Panc1 (cell line): ENCODE measurements at regions of chr5 and their contacts with region 1.

Region 1: DNA sequence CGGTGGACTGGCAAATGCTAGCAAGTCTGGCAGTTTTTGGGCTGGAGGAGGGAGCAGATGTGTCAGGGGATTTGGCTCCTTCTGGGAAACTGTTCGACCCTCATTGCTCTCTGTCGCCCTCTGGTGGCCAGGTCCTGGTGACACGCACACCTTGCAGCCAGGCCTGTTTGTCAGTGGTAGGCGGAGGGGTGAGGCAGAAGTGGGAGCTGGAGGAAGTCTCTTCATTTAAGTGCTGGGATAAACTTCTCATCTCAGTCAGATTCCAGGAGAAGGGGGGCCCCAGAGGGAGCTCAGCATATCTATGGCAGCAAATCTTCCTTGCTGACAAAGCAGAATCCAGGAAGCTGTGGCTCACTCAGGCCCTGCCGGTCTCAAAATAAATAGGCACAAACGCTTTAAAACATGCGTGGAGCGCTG is 326.5 kb downstream of the ZSWIM6 start:
- DNase-seq: peak; percentile 64
- ATAC-seq: peak; percentile 95
- H3K4me3 ChIP-seq: no peak overlapping the region
- H3K27ac ChIP-seq: no peak overlapping the region
- H3K4me1 ChIP-seq: no peaks in the 10 kb centered on the region; the same call in 1 of the 2 replicates
- H3K27me3 ChIP-seq: peaks cover 5% of the 10 kb centered on the region; the same call in 1 of the 2 replicates
- CTCF ChIP-seq: peak; percentile 96

Region 2: GRCh38 chr5:60259730-60260129 is 1398.9 kb before region 1 on chr5:
- CTCF ChIA-PET with region 1: no interaction called
- POLR2A ChIA-PET with region 1: no interaction called
- in situ Hi-C with region 1: no loop called
- intact Hi-C with region 1: no loop called
- DNase-seq: no peak
- ATAC-seq: no peak
- H3K4me3 ChIP-seq: no peak overlapping the region
- H3K27ac ChIP-seq: no peak overlapping the region
- H3K4me1 ChIP-seq: no peaks in the 10 kb centered on the region
- H3K27me3 ChIP-seq: no peaks in the 10 kb centered on the region
- CTCF ChIP-seq: no peak

Region 3: DNA sequence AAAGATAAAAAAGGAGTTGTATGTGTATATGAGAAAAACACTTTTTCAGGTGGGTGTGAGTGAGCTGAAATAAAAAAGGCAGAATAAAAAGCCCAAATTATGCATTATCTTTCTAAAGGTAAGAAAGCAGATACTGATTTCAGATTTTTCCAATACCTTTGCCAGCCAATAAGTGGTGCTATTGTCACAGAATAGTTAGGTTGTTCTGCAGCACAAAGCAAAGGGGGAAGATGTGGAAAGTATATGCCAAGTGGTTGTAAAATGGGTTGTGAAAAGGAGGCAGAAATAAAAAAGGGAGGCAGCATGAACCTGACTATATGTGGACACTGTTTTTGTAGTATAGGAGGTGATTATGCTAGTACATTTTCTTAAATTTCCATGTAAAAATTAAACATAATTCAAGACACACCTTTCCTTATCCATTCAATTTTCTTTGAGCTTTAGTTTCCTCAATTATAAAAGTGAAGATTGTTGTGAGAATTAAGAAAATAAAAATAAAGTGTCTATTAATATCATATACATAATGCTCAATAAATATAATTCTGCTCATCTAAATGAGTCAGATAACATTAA is 603.1 kb before region 1 on chr5:
- CTCF ChIA-PET with region 1: interaction called, 3 read pairs
- POLR2A ChIA-PET with region 1: no interaction called
- in situ Hi-C with region 1: no loop called
- intact Hi-C with region 1: loop called (anchors 5 kb)
- DNase-seq: no peak
- ATAC-seq: no peak
- H3K4me3 ChIP-seq: no peak overlapping the region
- H3K27ac ChIP-seq: no peak overlapping the region
- H3K4me1 ChIP-seq: peaks cover 21% of the 10 kb centered on the region; the same call in 1 of the 2 replicates
- H3K27me3 ChIP-seq: no peaks in the 10 kb centered on the region
- CTCF ChIP-seq: peak; percentile 72; the same call in 1 of the 2 replicates

Region 4: DNA sequence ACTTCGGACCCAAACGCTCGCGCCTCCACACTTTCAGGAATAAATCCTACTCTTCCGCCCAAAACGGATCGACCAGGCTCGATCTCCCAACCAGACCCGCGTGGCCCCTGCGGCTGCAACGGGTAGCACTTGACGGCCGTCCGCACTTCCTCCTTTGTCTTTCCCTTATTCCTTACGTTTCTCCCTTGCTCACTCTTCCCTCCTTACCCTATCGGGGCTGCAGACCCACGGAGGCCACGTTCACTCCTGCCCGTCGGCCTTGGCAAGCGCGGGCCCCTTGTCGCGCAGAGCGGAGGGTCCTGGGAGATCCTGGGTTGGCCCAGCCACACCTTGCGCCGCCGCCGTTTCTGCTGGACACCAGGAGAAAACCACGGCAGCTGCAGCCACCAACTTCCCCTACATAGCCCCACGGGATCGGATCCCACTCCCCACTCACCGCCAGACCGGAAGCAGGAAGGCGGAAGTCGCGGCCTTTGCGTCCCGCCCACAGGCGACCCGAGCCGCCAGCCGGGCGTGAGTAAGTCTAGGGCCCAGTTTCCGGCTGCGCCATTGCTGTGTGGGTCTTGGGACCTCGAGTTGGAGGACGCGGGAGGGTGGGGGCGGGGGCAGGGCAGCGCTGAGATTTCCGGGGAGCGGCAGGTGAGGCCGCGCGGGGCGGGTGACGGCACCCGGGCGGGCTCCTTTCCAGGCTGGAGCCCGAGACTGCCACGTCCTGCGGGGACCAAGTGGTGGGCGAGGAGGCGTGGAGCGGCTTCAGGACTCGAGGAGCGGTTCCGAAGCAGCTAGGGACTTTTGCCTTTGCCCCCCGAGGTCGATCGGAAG is 496.4 kb before region 1 on chr5 and contains the start of gene SMIM15:
- CTCF ChIA-PET with region 1: no interaction called
- POLR2A ChIA-PET with region 1: no interaction called
- in situ Hi-C with region 1: no loop called
- intact Hi-C with region 1: loop called (anchors 10 kb)
- DNase-seq: no peak
- ATAC-seq: peak; percentile 99
- H3K4me3 ChIP-seq: peak within 1 kb of the TSS; percentile 96
- H3K27ac ChIP-seq: peak within 1 kb of the TSS; percentile 97
- H3K4me1 ChIP-seq: peaks cover 30% of the 10 kb centered on the region
- H3K27me3 ChIP-seq: no peaks in the 10 kb centered on the region
- CTCF ChIP-seq: no peak
- total RNA-seq, gene SMIM15: 77.5 TPM

Region 5: DNA sequence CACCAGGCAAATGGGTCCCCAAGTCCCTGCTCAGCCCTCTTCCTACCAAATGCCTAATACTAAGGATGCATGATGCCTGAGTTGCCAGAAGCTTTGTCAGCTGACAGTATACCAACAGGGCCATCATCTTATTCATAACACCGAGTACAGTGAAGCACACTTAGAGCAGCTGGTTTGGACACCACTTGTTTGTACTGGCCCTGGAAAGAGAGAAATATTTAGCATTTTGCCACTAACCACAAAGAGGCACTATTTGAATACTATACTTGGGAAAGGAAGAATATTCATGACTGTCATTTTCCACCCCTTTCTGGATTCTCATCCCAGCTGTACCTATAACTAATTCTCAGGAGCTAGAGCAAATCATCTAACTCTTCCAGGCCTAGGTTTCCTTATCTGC is 283.0 kb after region 1 on chr5:
- CTCF ChIA-PET with region 1: no interaction called
- POLR2A ChIA-PET with region 1: no interaction called
- in situ Hi-C with region 1: no loop called
- intact Hi-C with region 1: no loop called
- DNase-seq: no peak
- ATAC-seq: no peak
- H3K4me3 ChIP-seq: no peak overlapping the region
- H3K27ac ChIP-seq: no peak overlapping the region
- H3K4me1 ChIP-seq: no peaks in the 10 kb centered on the region
- H3K27me3 ChIP-seq: peaks cover 4% of the 10 kb centered on the region; the same call in 1 of the 2 replicates
- CTCF ChIP-seq: no peak

Region 6: GRCh38 chr5:62284946-62285891 is 626.6 kb after region 1 on chr5:
- CTCF ChIA-PET with region 1: no interaction called
- POLR2A ChIA-PET with region 1: no interaction called
- in situ Hi-C with region 1: no loop called
- intact Hi-C with region 1: no loop called
- DNase-seq: no peak
- ATAC-seq: no peak
- H3K4me3 ChIP-seq: no peak overlapping the region
- H3K27ac ChIP-seq: no peak overlapping the region
- H3K4me1 ChIP-seq: no peaks in the 10 kb centered on the region
- H3K27me3 ChIP-seq: peaks cover 2% of the 10 kb centered on the region; the same call in 1 of the 2 replicates
- CTCF ChIP-seq: no peak